ENCODE measurements at regions of chr15 and their contacts with region 1.

Region 1: DNA sequence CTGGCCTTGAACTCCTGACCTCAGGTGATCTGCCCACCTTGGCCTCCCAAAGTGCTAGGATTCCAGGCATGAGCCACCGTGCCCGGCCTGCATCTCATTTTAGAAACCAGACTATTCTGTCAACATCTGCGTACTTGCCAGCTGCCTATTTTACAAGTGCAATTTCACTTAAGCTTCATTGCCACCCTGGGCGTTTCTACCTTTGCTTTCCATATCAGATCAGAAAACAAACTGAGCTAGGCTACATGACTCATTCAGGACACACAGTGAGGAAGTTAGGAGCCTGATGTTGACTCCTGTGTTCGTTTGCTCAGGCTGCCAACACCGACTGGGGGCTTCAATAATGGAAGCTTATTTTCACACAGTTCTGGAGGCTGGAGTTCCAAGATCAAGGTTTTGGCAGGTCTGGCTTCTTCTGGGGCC is 42.3 kb upstream of the KLHL25 start:
- DNase-seq: no peak
- H3K4me3 ChIP-seq: no peak overlapping the region
- H3K4me1 ChIP-seq: peaks cover 2% of the 10 kb centered on the region; the same call in 1 of the 2 replicates
- H3K27me3 ChIP-seq: no peaks in the 10 kb centered on the region

Region 2: DNA sequence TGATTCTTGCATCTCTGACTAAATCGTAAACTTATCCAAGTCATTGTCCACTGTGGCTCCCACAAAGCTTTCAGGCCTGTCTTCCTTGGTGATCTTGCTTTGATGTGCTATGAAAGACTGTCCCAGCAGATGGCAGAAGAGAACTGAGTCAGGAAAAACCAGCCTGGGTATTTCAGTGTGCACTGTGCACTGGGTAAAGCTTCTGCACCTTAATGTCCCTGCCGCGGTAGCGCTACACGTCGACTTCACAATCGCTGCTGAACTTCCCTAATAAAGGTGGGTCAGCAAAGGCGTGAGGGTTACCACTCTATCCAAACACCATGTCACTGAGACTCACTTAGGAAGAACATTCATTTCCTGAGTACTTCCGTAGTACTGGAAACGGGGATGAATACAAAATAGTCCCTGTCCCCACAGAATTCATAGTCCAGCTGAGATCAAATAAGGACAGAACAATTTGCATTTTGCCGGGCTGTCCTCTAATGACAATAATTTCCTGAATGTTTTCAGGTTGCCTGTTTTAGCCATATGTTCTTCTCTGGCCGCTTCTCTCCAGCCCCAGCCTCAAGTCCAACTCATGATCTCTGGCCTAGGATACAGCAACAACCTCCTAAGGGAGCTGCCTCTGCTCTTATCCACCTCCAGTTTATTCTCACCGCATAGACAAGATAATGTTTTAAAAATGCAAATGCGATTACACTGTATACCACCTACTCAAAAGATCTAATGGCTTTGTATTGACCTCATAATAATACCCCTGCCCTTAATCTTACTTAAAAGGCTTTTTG is 540.2 kb before region 1 on chr15:
- in situ Hi-C with region 1: loop called (anchors 5 kb)
- DNase-seq: peak; percentile 90 to 96
- H3K4me3 ChIP-seq: no peak overlapping the region
- H3K4me1 ChIP-seq: peaks cover 4% of the 10 kb centered on the region; the same call in 1 of the 2 replicates
- H3K27me3 ChIP-seq: no peaks in the 10 kb centered on the region

Region 3: GRCh38 chr15:85772668-85773067 is 64.4 kb before region 1 on chr15:
- in situ Hi-C with region 1: no loop called
- DNase-seq: no peak
- H3K4me3 ChIP-seq: no peak overlapping the region
- H3K4me1 ChIP-seq: no peaks in the 10 kb centered on the region
- H3K27me3 ChIP-seq: no peaks in the 10 kb centered on the region

Measured in HAP-1 (cell line).